AG04449 (cell line): ENCODE measurements at regions of chr14 and their contacts with region 1.

Region 1: DNA sequence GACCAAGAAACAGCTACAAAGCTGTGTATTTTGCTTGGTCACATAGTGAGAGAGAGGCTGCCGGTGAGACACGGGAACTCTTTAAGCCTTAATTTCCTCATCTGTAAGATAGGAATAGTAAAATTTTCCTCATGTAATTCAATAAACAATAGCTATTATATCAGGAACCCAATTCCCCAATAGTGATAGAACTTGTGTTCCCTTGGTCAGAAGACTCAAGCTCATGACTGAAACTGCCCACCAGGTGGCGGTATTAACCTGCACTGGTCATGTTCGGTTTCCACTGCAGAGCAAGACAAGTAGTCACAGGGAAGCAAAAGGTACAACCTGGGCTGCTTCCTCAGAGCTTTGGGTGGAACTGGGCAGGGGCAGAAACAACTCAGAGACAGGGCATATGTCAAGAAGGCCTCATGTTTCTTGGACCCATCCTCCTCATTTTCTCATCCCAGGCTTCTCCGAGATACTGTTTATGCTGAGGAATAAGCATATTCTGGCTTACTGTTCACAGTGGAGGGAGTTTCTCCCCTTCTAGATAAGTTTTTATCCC is 4.2 kb upstream of the AJUBA start:
- DNase-seq: peak; percentile 49
- H3K4me3 ChIP-seq: no peak overlapping the region
- CTCF ChIP-seq: peak; percentile 79

Region 2: DNA sequence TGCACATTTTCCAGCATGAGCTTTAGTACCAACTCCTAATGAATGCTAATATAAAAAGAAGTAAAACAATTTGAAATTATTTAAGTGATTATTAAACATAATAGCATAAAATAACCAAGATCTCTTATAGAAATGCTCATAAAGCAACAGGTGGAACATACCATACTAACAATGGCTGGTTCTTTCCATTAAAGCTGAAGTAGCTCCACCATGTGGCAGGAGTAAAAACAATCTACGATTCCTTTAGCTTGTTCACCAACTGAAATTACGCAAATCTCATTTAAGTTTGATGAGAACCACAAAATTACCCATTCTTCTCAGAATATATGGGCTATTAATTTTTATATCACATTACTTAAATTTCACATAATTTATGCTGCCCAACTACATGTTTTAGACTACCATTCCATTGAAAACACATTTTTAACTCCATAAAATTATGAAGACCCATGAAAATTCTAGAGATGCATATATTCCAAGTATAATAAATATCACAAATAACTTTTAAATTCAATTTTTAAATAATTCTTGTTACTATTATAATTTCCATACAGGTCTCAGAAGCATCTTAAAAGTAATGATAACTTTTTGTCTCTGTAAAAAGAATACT is 611.2 kb before region 1 on chr14:
- CTCF ChIA-PET with region 1: no interaction called
- POLR2A ChIA-PET with region 1: no interaction called
- DNase-seq: no peak
- H3K4me3 ChIP-seq: no peak overlapping the region
- CTCF ChIP-seq: peak; percentile 39

Region 3: GRCh38 chr14:22929104-22929847 is 57.3 kb before region 1 on chr14 and contains the start of gene PRMT5:
- CTCF ChIA-PET with region 1: interaction called, 91 read pairs
- POLR2A ChIA-PET with region 1: interaction called, 24 read pairs
- DNase-seq: peak; percentile 99
- H3K4me3 ChIP-seq: peak within 1 kb of the TSS; percentile 100
- CTCF ChIP-seq: no peak

Region 4: GRCh38 chr14:23000860-23001259 is 14.3 kb after region 1 on chr14:
- CTCF ChIA-PET with region 1: interaction called, 216 read pairs
- POLR2A ChIA-PET with region 1: no interaction called
- DNase-seq: no peak
- H3K4me3 ChIP-seq: no peak overlapping the region
- CTCF ChIP-seq: no peak

Region 5: GRCh38 chr14:23034483-23035302 is 48.1 kb after region 1 on chr14 and contains the start of gene PSMB5:
- CTCF ChIA-PET with region 1: interaction called, 1,423 read pairs
- POLR2A ChIA-PET with region 1: no interaction called
- DNase-seq: peak; percentile 73
- H3K4me3 ChIP-seq: peak within 1 kb of the TSS; percentile 92
- CTCF ChIP-seq: peak; percentile 3

Region 6: DNA sequence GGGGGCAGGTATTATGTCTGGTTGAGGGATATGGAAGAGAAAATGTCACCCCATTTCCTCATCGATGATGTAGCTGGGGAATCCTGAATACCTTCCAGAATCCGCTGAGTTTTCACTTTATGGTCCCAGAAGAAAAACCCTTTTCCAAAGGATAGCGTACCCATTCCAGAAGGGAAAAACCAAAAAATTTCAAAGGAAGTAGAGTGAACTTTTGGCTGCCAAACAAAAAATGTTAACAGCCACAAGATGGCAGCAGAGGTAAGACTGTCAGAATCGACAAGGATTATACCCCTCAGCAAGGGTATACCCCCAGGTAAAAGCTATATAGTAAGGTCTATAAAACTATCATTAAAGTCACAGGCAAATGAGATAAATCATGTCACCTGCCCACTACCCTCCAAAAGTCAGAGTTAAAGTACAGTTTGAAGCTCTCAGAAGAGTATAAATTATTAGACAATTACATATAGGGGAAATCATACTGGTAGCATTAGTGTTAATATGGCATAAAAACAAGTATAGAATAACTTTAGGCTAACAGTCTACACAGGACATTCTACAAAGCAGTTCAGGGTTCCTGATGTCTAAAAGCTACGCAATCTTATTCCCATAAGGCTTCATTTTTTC is 90.3 kb after region 1 on chr14:
- CTCF ChIA-PET with region 1: interaction called, 70 read pairs
- POLR2A ChIA-PET with region 1: interaction called, 4 read pairs
- DNase-seq: no peak
- H3K4me3 ChIP-seq: no peak overlapping the region
- CTCF ChIP-seq: no peak

Region 7: GRCh38 chr14:23114669-23115491 is 128.3 kb after region 1 on chr14:
- CTCF ChIA-PET with region 1: interaction called, 152 read pairs
- POLR2A ChIA-PET with region 1: no interaction called
- DNase-seq: peak; percentile 97
- H3K4me3 ChIP-seq: 0 out of 2 replicates have a peak overlapping the region, but pooled peaks have one; percentile 20
- CTCF ChIP-seq: peak; percentile 7